ENCODE measurements at regions of chr7 and their contacts with region 1.

Region 1: GRCh38 chr7:158856883-158857668 is 718 bp downstream of the DYNC2I1 start:
- DNase-seq: peak in 1 of 5 donors; percentile 6
- H3K4me3 ChIP-seq: peak overlapping the region; percentile 80 to 81
- H3K4me3 Mint-ChIP-seq: peak overlapping the region; percentile 75 to 98 (median 90)
- H3K27ac ChIP-seq: peak overlapping the region; percentile 77
- H3K27ac Mint-ChIP-seq: peak overlapping the region; percentile 46 to 92 (median 79)
- H3K4me1 ChIP-seq: peaks cover 19% of the 10 kb centered on the region
- H3K4me1 Mint-ChIP-seq: peaks cover 18 to 34% (median 23%) of the 10 kb centered on the region in 4 donors
- H3K27me3 ChIP-seq: no peaks in the 10 kb centered on the region
- H3K27me3 Mint-ChIP-seq: no peaks in the 10 kb centered on the region

Region 2: GRCh38 chr7:158782761-158783401 is 74.2 kb before region 1 on chr7:
- CTCF ChIA-PET with region 1: no interaction called
- POLR2A ChIA-PET with region 1: interaction called, 4 read pairs
- intact Hi-C with region 1: loop called (anchors 2 kb)
- DNase-seq: peak in 2 of 5 donors; percentile 13 to 42
- H3K4me3 ChIP-seq: no peak overlapping the region
- H3K4me3 Mint-ChIP-seq: no peak overlapping the region
- H3K27ac ChIP-seq: no peak overlapping the region
- H3K27ac Mint-ChIP-seq: no peak overlapping the region
- H3K4me1 ChIP-seq: peaks cover 27% of the 10 kb centered on the region
- H3K4me1 Mint-ChIP-seq: peaks cover 3 to 23% (median 14%) of the 10 kb centered on the region in 4 donors
- H3K27me3 ChIP-seq: no peaks in the 10 kb centered on the region
- H3K27me3 Mint-ChIP-seq: no peaks in the 10 kb centered on the region

Region 3: GRCh38 chr7:158824028-158824427 is 33.0 kb before region 1 on chr7:
- CTCF ChIA-PET with region 1: interaction called, 5 read pairs
- POLR2A ChIA-PET with region 1: interaction called, 17 read pairs
- intact Hi-C with region 1: loop called (anchors 1 kb)
- DNase-seq: peak; percentile 77 to 88 (median 82)
- H3K4me3 ChIP-seq: no peak overlapping the region
- H3K4me3 Mint-ChIP-seq: peak overlapping the region; percentile 2 to 85 (median 74)
- H3K27ac ChIP-seq: peak overlapping the region; percentile 48
- H3K27ac Mint-ChIP-seq: peak overlapping the region; percentile 88 to 96 (median 93)
- H3K4me1 ChIP-seq: peaks cover 85% of the 10 kb centered on the region
- H3K4me1 Mint-ChIP-seq: peaks cover 46 to 76% (median 62%) of the 10 kb centered on the region in 4 donors
- H3K27me3 ChIP-seq: no peaks in the 10 kb centered on the region
- H3K27me3 Mint-ChIP-seq: no peaks in the 10 kb centered on the region

Measured in CD4-positive, alpha-beta memory T cell (primary cell).